ENCODE measurements at regions of chr4 and their contacts with region 1.

Region 1: GRCh38 chr4:164779811-164780216 is 25.9 kb downstream of the SMIM31 start:
- DNase-seq: peak; percentile 79
- H3K4me3 ChIP-seq: no peak overlapping the region
- H3K27ac ChIP-seq: no peak overlapping the region
- H3K4me1 ChIP-seq: peaks cover 15% of the 10 kb centered on the region
- H3K27me3 ChIP-seq: no peaks in the 10 kb centered on the region
- CTCF ChIP-seq: peak; percentile 83

Region 2: DNA sequence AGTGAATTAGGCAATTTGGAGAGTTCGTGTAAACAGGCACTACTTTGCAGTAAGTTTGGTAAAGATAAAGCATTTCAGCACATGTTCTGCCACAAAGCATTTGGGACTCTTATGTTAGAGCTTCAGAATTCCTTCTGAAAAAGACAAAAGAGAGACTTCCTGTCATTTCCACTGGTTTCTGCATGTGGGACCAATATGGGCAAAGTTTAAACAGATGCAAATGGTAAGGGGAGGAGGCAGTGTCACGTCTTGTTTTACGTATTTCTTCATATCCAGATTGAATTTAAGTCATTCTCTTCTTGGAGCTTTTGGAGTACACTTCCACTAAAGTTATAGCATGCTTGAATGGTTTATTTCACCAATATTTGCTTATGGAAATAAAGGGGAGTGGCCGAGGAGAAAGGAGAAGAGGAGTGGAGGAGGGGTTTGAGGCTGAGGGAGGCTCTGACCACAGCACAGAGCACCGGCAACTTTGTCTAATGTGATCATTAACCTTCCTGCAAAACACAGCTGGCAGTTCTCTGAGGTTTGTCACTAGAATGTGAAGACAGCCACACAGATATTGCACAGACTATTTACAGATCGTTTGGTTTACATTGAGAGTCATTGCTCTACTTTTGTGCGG is 97.0 kb after region 1 on chr4 and contains the start of gene APELA:
- CTCF ChIA-PET with region 1: no interaction called
- POLR2A ChIA-PET with region 1: no interaction called
- intact Hi-C with region 1: loop called (anchors 5 kb)
- DNase-seq: peak; percentile 65
- H3K4me3 ChIP-seq: peak within 1 kb of the TSS; percentile 49
- H3K27ac ChIP-seq: peak within 1 kb of the TSS; percentile 53
- H3K4me1 ChIP-seq: peaks cover 29% of the 10 kb centered on the region
- H3K27me3 ChIP-seq: no peaks in the 10 kb centered on the region
- CTCF ChIP-seq: no peak
- total RNA-seq, gene APELA: 16.5 and 16.9 TPM in 2 replicates

Region 3: DNA sequence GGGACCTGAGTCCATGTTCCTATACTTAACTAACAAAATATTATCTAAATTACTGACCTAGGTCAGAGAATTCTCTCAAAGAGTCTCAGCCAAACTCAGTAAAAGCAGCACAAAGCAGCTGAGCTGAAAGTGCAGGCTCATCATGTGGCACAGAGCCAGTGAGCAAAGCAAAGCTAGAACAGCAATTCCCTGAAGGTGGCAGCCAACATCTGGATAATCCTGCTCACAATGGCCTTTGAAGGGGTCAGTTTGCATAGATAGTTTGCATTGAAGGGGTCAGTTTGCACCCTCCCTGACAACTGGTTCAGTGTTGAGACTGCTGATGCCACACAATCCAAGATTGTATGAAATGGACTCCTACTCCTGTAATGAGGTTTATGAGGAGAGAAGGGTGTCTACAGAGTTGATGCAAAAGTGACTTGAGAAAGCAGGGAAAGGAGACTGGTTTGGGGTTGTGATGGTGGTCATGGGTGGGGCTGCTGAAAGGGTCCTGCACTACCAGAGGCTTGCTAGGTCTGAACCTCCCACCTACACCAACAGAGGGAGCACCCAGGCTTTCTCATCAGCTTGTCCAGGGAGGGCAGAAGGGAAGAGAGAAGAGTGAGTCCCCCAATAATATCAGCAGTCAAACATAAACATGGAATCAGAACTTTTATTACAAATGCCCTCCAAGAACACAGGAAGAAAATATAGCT is 157.9 kb after region 1 on chr4:
- CTCF ChIA-PET with region 1: interaction called, 5 read pairs
- POLR2A ChIA-PET with region 1: no interaction called
- intact Hi-C with region 1: loop called (anchors 1 kb)
- DNase-seq: peak; percentile 58
- H3K4me3 ChIP-seq: no peak overlapping the region
- H3K27ac ChIP-seq: no peak overlapping the region
- H3K4me1 ChIP-seq: peaks cover 4% of the 10 kb centered on the region
- H3K27me3 ChIP-seq: no peaks in the 10 kb centered on the region
- CTCF ChIP-seq: peak; percentile 36

Region 4: DNA sequence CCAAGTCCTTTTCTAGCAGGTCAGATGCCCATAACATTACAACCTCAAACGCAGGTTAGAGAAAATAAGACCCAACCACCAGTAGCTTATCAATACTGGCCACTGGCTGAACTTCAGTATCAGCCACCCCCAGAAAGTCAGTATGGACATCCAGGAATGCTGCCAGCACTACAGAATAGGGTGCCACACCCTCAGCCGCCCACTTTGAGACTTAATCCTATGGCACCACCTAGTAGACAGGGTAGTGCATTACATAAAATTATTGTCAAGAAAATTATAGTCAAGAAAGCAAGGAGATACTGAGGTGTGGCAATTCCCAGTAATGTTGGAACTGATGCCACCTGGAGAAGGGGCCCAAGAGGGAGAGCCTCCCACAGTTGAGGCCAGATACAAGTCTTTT is 217.5 kb after region 1 on chr4:
- CTCF ChIA-PET with region 1: no interaction called
- POLR2A ChIA-PET with region 1: no interaction called
- intact Hi-C with region 1: loop called (anchors 2 kb)
- DNase-seq: peak; percentile 45
- H3K4me3 ChIP-seq: no peak overlapping the region
- H3K27ac ChIP-seq: no peak overlapping the region
- H3K4me1 ChIP-seq: peaks cover 7% of the 10 kb centered on the region
- H3K27me3 ChIP-seq: no peaks in the 10 kb centered on the region
- CTCF ChIP-seq: peak; percentile 40; the same call in 1 of the 2 replicates

Region 5: DNA sequence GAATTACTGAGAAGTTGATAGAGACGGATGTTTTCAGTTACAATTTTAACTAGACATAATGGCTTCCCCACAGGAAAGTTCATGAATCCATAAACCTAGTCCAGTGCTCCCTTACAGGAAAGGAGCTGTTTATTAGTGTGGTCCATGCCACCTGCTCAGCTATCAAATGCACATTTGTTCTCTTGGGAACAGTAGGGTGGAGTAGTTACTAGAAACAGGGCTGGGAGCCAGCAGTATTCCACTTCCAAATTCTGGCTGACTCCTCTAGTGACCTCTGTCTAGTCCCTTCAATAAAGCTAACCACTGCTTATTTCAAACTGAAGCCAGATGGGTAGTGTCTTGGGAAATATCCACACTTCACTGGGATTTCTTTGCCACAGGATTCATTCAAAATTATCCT is 1004.9 kb after region 1 on chr4:
- CTCF ChIA-PET with region 1: no interaction called
- POLR2A ChIA-PET with region 1: no interaction called
- intact Hi-C with region 1: no loop called
- DNase-seq: no peak
- H3K4me3 ChIP-seq: no peak overlapping the region
- H3K27ac ChIP-seq: no peak overlapping the region
- H3K4me1 ChIP-seq: peaks cover 15% of the 10 kb centered on the region
- H3K27me3 ChIP-seq: no peaks in the 10 kb centered on the region
- CTCF ChIP-seq: no peak